Psoas muscle (tissue), 8 donors: ENCODE measurements at regions of chr22 and their contacts with region 1.

Region 1: DNA sequence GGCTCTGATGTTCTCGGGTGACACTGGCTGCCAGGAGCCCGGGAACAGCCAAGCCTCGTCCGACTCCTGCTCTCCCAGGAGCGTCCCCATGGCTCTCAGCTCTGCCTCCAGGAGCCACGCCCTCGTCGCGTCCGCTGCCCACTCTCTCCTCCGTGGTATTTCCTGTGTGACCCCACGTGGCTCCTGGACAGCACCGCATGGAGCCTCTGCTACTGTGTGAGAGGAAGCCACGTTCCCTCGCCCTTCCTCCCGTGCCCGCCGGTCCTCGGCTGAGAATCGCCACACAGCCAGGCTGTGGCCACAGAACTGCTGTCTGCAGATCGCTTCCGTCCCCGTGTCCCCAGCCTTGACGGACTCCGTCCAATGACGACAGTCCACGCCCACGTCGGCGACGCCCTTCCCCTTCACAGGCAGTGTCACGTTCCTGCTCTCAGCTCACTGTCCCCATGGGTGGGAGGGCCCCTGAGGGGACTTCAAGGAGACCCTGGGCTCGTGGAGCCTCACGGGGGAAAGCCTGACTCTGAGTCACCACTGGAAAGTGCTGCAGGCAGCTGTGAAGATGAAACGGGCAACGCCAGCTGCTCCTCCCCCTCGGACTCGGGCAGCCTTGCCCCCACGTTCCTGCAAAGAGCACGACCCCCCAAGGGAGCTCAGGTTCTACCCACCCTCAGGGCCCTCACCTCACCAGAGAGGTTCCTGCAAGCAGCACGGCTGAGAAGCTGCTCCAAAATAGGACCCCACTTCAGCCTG is 458.5 kb downstream of the BRD1 start:
- DNase-seq: no peak
- ATAC-seq: no peak
- H3K4me3 ChIP-seq: peak overlapping the region; percentile 28
- H3K27ac ChIP-seq: no peak overlapping the region
- H3K4me1 ChIP-seq: no peaks in the 10 kb centered on the region
- H3K27me3 ChIP-seq: peaks cover 0 to 22% (median 0%) of the 10 kb centered on the region in 3 donors
- CTCF ChIP-seq: no peak

Region 2: DNA sequence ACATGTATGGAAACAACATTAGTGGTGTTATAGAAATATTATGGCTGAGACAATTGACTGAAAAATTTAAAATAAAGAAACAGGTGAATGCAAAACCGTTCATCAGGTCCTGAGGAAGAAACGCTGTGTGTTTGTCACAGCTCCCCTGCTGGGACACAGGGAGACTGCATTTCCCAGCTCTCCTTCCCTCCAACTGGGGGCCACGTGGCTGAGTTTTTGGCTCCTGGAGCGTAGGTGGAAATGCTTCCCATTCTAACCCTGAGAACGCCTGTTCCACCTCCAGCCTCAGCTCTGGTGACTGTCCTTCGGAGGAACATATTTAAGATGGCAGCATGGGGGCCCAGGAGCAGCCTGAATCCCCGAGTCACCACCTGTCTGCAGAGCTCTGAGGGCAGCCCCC is 59.9 kb after region 1 on chr22:
- intact Hi-C with region 1: loop called in 1 of 2 experiments (anchors 10 kb)
- DNase-seq: no peak
- ATAC-seq: no peak
- H3K4me3 ChIP-seq: no peak overlapping the region
- H3K27ac ChIP-seq: no peak overlapping the region
- H3K4me1 ChIP-seq: no peaks in the 10 kb centered on the region
- H3K27me3 ChIP-seq: peaks cover 0 to 10% (median 2%) of the 10 kb centered on the region in 3 donors
- CTCF ChIP-seq: no peak

Region 3: GRCh38 chr22:49449811-49450446 is 80.8 kb after region 1 on chr22:
- intact Hi-C with region 1: no loop called
- DNase-seq: no peak
- ATAC-seq: no peak
- H3K4me3 ChIP-seq: no peak overlapping the region
- H3K27ac ChIP-seq: no peak overlapping the region
- H3K4me1 ChIP-seq: no peaks in the 10 kb centered on the region
- H3K27me3 ChIP-seq: peaks cover 0 to 11% (median 9%) of the 10 kb centered on the region in 3 donors
- CTCF ChIP-seq: no peak